ENCODE measurements at regions of chr5 and their contacts with region 1.

Region 1: GRCh38 chr5:149141224-149141956 is at the start of gene ABLIM3:
- DNase-seq: peak; percentile 42 to 69 (median 67)
- H3K4me3 ChIP-seq: peak within 1 kb of the TSS; percentile 20 to 77 (median 58)
- H3K27ac ChIP-seq: no peak within 1 kb of the TSS
- H3K4me1 ChIP-seq: peaks cover 0 to 10% (median 8%) of the 10 kb centered on the region in 4 experiments
- H3K27me3 ChIP-seq: peaks cover under 1 to 14% (median 11%) of the 10 kb centered on the region in 5 experiments

Region 2: GRCh38 chr5:149153751-149154610 is 12.6 kb after region 1 on chr5:
- CTCF ChIA-PET with region 1: interaction called, 22 read pairs
- POLR2A ChIA-PET with region 1: no interaction called
- DNase-seq: no peak
- H3K4me3 ChIP-seq: no peak overlapping the region
- H3K27ac ChIP-seq: no peak overlapping the region
- H3K4me1 ChIP-seq: no peaks in the 10 kb centered on the region
- H3K27me3 ChIP-seq: peaks cover 0 to 4% (median 0%) of the 10 kb centered on the region in 5 experiments

Region 3: DNA sequence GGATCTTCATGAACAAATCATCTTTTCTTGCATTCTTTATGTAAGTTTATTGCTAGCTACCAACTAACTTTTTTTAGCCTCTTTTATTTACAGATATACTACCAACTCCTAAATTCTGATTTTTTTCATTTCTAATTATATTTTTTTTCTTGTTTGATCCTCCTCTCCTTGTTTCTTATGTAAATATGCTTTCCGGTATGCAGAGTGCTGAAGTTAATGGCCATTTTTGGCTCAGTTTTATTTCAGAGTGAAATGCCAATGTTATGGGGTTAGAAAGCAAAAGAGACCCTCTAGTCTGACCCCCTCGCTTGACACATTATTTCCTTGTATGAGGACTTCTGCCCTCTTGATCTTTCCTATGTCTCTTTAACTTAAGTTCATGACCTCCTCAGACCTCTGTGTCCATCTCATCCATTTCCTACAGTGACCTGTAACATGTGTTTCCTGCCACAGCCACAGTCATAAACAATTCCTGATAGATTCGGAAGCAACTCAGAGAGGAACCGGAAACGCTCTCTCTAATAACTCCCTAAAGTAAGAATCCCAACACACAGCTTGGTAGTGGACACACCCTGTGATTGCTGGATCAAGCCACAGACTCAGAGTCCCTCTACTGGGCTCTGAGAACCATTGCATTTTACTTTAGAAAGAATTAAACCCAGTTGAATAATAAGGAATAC is 87.4 kb after region 1 on chr5:
- CTCF ChIA-PET with region 1: interaction called, 98 read pairs
- POLR2A ChIA-PET with region 1: no interaction called
- DNase-seq: peak; percentile 39 to 64 (median 63)
- H3K4me3 ChIP-seq: no peak overlapping the region
- H3K27ac ChIP-seq: no peak overlapping the region
- H3K4me1 ChIP-seq: peaks cover 0 to 12% (median 8%) of the 10 kb centered on the region in 4 experiments
- H3K27me3 ChIP-seq: no peaks in the 10 kb centered on the region